Mammary epithelial cell (primary cell): ENCODE measurements at regions of chr12 and their contacts with region 1.

Region 1: DNA sequence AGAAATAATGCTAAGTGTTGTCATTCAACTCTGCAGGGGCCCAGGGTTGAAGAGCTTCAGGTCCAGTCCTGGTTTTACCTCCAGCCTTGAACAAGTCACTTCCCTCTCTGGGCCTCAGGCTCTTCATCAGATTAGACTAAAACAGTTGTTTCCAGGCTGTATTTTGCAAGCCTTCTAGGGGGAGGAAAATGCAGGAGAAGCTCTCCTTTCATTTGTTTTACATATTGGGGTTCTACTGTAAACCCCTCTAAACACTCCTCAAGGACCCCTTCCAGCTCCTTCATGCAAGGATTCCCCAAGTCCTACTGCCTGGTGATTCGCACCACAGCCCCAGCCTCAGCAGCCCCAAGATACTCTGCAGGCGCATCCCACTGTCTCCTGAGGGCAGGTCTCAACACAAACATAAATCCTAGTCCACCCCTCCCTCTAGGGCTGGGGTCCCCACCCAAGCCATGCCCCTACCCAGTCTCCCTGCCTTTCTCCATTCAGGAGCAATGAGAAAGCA is 2.7 kb downstream of the SDR9C7 start:
- DNase-seq: peak; percentile 57
- H3K4me3 ChIP-seq: no peak overlapping the region
- H3K27ac ChIP-seq: no peak overlapping the region
- H3K4me1 ChIP-seq: peaks cover 25% of the 10 kb centered on the region
- H3K27me3 ChIP-seq: no peaks in the 10 kb centered on the region
- CTCF ChIP-seq: no peak

Region 2: DNA sequence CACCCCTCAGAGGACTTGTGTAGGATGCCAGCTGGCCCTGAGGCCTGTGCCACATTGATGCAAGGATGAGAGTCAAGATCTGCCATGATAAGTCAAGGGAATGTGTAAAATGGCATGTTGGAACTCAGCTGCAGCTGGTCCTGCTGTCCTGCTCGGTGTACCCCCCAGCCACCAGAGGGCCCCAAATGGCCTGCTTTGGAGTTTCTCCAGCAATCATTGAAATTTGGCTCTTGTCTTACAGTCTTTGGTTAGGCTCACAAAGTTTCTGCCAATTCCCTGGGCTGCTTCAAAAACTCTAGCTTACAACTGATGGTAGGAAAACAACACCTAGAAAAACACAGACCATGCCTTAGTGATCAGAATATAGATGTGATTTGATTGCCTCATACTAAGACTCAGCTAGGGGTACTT is 91.6 kb before region 1 on chr12:
- CTCF ChIA-PET with region 1: no interaction called
- dilution Hi-C with region 1: no loop called
- in situ Hi-C with region 1: no loop called
- intact Hi-C with region 1: loop called (anchors 1 kb)
- DNase-seq: peak; percentile 56
- H3K4me3 ChIP-seq: no peak overlapping the region
- H3K27ac ChIP-seq: no peak overlapping the region
- H3K4me1 ChIP-seq: peaks cover 34% of the 10 kb centered on the region
- H3K27me3 ChIP-seq: no peaks in the 10 kb centered on the region
- CTCF ChIP-seq: peak; percentile 77 to 85

Region 3: GRCh38 chr12:56914724-56915123 is 16.8 kb before region 1 on chr12:
- CTCF ChIA-PET with region 1: no interaction called
- dilution Hi-C with region 1: no loop called
- in situ Hi-C with region 1: no loop called
- intact Hi-C with region 1: no loop called
- DNase-seq: no peak
- H3K4me3 ChIP-seq: no peak overlapping the region
- H3K27ac ChIP-seq: no peak overlapping the region
- H3K4me1 ChIP-seq: no peaks in the 10 kb centered on the region
- H3K27me3 ChIP-seq: no peaks in the 10 kb centered on the region
- CTCF ChIP-seq: no peak

Region 4: DNA sequence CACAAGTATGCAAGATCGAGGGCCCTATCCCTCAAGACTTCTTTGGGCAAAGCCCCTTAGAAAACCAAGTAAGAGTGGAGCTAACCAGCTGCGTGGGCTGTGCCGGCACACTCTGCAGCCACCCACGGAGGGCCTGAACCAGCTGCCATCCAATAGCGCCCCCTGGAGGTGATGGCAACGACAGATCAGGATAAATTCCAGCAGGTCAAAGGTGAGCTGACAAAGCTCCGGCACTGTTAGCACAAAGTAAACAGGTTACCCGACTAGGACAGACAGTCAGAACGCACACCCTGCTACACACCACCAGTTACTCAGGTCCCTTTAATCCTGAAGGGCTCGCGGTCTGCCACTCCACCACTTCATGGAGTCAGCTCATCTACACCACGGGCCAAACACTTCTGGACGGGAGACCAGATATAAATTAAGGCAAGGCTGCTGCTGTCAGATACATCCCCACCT is 70.0 kb after region 1 on chr12:
- CTCF ChIA-PET with region 1: no interaction called
- dilution Hi-C with region 1: no loop called
- in situ Hi-C with region 1: no loop called
- intact Hi-C with region 1: no loop called
- DNase-seq: peak; percentile 20
- H3K4me3 ChIP-seq: no peak overlapping the region
- H3K27ac ChIP-seq: no peak overlapping the region
- H3K4me1 ChIP-seq: peaks cover 5% of the 10 kb centered on the region
- H3K27me3 ChIP-seq: no peaks in the 10 kb centered on the region
- CTCF ChIP-seq: peak; percentile 80 to 83

Region 5: GRCh38 chr12:57368349-57369095 is 437.0 kb after region 1 on chr12:
- CTCF ChIA-PET with region 1: no interaction called
- dilution Hi-C with region 1: no loop called
- in situ Hi-C with region 1: no loop called
- intact Hi-C with region 1: no loop called
- DNase-seq: no peak
- H3K4me3 ChIP-seq: no peak overlapping the region
- H3K27ac ChIP-seq: no peak overlapping the region
- H3K4me1 ChIP-seq: no peaks in the 10 kb centered on the region
- H3K27me3 ChIP-seq: no peaks in the 10 kb centered on the region
- CTCF ChIP-seq: no peak